Psoas muscle (tissue), 8 donors: ENCODE measurements at regions of chr17 and their contacts with region 1.

Region 1: DNA sequence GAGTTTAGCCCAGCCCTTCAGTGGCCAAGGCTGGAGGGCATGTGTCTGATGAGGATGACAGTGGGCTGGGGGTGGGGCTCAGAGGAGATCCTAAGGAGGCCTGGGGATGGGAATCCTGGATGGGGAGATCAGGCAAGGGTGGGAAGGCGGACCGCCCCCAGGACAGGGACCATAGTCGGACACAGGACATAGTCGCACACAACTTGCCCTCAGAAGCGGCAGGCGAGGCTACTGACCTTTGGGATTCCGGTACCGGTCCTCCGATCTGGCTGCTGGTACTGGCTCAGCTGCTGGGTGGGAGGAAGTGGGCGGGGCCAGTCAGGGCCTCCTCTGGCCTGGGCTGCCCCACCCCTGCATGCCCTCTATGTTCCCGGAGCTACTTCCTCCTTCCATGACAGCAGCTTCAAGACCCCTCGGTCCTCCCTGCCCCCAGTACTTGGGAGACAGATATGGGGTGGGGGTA is 1.0 kb downstream of the CD79B start:
- DNase-seq: peak; percentile 71 to 83
- ATAC-seq: peak; percentile 20 to 31 (median 24)
- H3K4me3 ChIP-seq: peak overlapping the region; percentile 32
- H3K27ac ChIP-seq: peak overlapping the region; percentile 38
- H3K4me1 ChIP-seq: peaks cover 7% of the 10 kb centered on the region
- H3K27me3 ChIP-seq: no peaks in the 10 kb centered on the region
- CTCF ChIP-seq: no peak

Region 2: GRCh38 chr17:63998050-63998720 is 67.1 kb after region 1 on chr17 and contains the start of gene PRR29:
- intact Hi-C with region 1: loop called in 1 of 2 experiments (anchors 5 kb)
- DNase-seq: peak; percentile 71 to 85
- ATAC-seq: peak; percentile 58 to 77 (median 68)
- H3K4me3 ChIP-seq: peak within 1 kb of the TSS; percentile 64
- H3K27ac ChIP-seq: no peak within 1 kb of the TSS
- H3K4me1 ChIP-seq: peaks cover 14% of the 10 kb centered on the region
- H3K27me3 ChIP-seq: peaks cover 0 to 23% (median 4%) of the 10 kb centered on the region in 3 donors
- CTCF ChIP-seq: no peak
- total RNA-seq, gene PRR29: 0.19 to 0.47 (median 0.25) TPM in 3 of 4 donors, not detected in the other